Psoas muscle (tissue), 8 donors: ENCODE measurements at regions of chr12 and their contacts with region 1.

Region 1: GRCh38 chr12:49288412-49288853 is 6.5 kb upstream of the PRPH start:
- DNase-seq: peak in 1 of 2 donors; percentile 40
- ATAC-seq: peak in 3 of 4 donors; percentile 50 to 72 (median 67)
- H3K4me3 ChIP-seq: no peak overlapping the region
- H3K27ac ChIP-seq: no peak overlapping the region
- H3K4me1 ChIP-seq: no peaks in the 10 kb centered on the region
- H3K27me3 ChIP-seq: peaks cover 0 to 12% (median 7%) of the 10 kb centered on the region in 3 donors
- CTCF ChIP-seq: peak; percentile 81

Region 2: DNA sequence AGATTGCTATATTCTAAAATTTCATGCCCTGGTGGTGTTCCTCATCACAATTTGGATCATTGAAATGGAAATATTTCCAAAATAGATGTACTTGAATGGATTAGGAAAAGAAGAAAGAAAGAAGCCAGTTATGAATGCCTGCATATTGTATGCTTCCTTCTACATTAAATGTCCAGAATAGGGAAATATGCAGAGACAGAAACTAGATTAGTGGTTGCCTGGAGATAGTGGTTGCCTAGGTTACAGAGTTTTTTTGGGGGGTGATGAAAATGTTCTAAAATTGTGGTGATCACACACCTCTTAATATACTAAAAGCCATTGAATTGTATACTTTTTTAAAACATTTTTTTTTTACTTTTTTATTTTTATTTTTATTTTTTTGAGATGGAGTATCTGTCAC is 117.5 kb before region 1 on chr12:
- intact Hi-C with region 1: no loop called
- DNase-seq: no peak
- ATAC-seq: no peak
- H3K4me3 ChIP-seq: no peak overlapping the region
- H3K27ac ChIP-seq: no peak overlapping the region
- H3K4me1 ChIP-seq: no peaks in the 10 kb centered on the region
- H3K27me3 ChIP-seq: no peaks in the 10 kb centered on the region
- CTCF ChIP-seq: no peak

Region 3: GRCh38 chr12:49336645-49337584 is 48.5 kb after region 1 on chr12 and contains the start of gene C1QL4:
- intact Hi-C with region 1: loop called (anchors 2 to 5 kb)
- DNase-seq: peak; percentile 84 to 91
- ATAC-seq: peak; percentile 83 to 96 (median 91)
- H3K4me3 ChIP-seq: peak within 1 kb of the TSS; percentile 58
- H3K27ac ChIP-seq: no peak within 1 kb of the TSS
- H3K4me1 ChIP-seq: no peaks in the 10 kb centered on the region
- H3K27me3 ChIP-seq: peaks cover 0 to 62% (median 22%) of the 10 kb centered on the region in 3 donors
- CTCF ChIP-seq: peak; percentile 94
- total RNA-seq, gene C1QL4: not detected

Region 4: GRCh38 chr12:49342066-49342913 is 53.9 kb after region 1 on chr12:
- intact Hi-C with region 1: loop called (anchors 2 to 5 kb)
- DNase-seq: peak; percentile 73 to 84
- ATAC-seq: peak; percentile 41 to 62 (median 49)
- H3K4me3 ChIP-seq: peak overlapping the region; percentile 61
- H3K27ac ChIP-seq: no peak overlapping the region
- H3K4me1 ChIP-seq: peaks cover 32% of the 10 kb centered on the region
- H3K27me3 ChIP-seq: peaks cover 0 to 73% (median 26%) of the 10 kb centered on the region in 3 donors
- CTCF ChIP-seq: peak; percentile 68

Region 5: GRCh38 chr12:49515266-49515665 is 226.8 kb after region 1 on chr12:
- intact Hi-C with region 1: loop called in 1 of 2 experiments (anchors 5 kb)
- DNase-seq: no peak
- ATAC-seq: no peak
- H3K4me3 ChIP-seq: no peak overlapping the region
- H3K27ac ChIP-seq: no peak overlapping the region
- H3K4me1 ChIP-seq: no peaks in the 10 kb centered on the region
- H3K27me3 ChIP-seq: no peaks in the 10 kb centered on the region
- CTCF ChIP-seq: no peak